T-cell (primary cell): ENCODE measurements at regions of chr3 and their contacts with region 1.

Region 1: DNA sequence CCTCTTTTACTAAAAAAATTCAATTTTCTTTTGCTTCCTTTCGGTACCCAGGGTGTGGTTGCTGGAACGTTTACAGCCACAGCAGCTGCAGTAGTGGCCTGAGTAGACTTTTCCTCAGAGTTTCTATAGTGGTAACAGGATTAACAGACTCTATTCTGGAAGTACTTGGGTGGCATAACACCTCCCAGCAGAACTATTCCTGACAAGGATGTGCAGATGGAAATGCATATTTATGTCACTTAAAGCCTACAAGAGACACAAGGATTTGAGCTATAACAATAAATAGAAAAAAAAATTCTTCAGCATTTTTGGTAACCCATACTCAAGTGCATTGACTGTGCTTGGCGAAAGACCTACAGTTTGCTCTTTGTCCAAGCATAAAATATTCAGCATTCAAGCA is 94.0 kb downstream of the MDFIC2 start:
- DNase-seq: no peak
- ATAC-seq: no peak
- H3K4me3 ChIP-seq: no peak overlapping the region
- H3K4me3 Mint-ChIP-seq: no peak overlapping the region
- H3K27ac ChIP-seq: no peak overlapping the region
- H3K27ac Mint-ChIP-seq: no peak overlapping the region
- H3K4me1 ChIP-seq: no peaks in the 10 kb centered on the region
- H3K4me1 Mint-ChIP-seq: no peaks in the 10 kb centered on the region
- H3K27me3 ChIP-seq: no peaks in the 10 kb centered on the region
- H3K27me3 Mint-ChIP-seq: peaks cover 0 to 15% of the 10 kb centered on the region in 2 donors

Region 2: GRCh38 chr3:70182161-70182560 is 36.3 kb before region 1 on chr3:
- CTCF ChIA-PET with region 1: no interaction called
- POLR2A ChIA-PET with region 1: interaction called in 1 of 2 experiments, 10 read pairs
- DNase-seq: no peak
- ATAC-seq: no peak
- H3K4me3 ChIP-seq: no peak overlapping the region
- H3K4me3 Mint-ChIP-seq: no peak overlapping the region
- H3K27ac ChIP-seq: no peak overlapping the region
- H3K27ac Mint-ChIP-seq: no peak overlapping the region
- H3K4me1 ChIP-seq: no peaks in the 10 kb centered on the region
- H3K4me1 Mint-ChIP-seq: no peaks in the 10 kb centered on the region
- H3K27me3 ChIP-seq: peaks cover 0 to 4% of the 10 kb centered on the region in 2 experiments
- H3K27me3 Mint-ChIP-seq: peaks cover 0 to 13% of the 10 kb centered on the region in 2 donors

Region 3: DNA sequence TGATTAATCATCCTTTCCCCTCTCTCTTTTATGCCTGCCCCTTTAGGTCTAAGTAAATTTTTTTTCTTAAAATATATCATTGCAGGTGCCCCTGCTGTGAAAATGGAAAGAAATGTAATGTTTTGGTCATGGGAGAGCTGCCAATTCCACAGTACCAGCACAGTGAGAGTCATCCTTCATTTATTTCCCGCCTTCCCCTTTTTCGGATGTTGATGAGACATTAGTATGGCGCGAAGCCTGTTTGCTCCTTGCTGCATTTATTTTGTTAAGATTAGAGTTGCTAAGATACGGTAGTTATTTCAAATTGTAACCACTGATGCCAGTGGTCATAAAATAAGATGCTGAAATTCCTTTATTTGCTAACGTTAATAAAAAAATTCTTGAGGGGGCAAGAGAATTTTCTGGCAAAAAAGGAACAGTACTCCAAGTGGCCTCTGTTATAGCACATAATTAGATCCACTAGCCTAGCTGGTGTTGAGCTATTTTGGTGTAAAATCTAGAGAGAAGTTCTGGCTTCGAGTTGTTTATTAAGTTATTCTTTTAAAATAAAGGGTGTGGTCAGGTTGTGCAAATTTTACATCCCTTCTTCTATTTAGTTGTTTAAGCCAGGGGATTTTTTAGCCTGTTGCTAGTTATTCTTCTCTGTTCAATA is 31.2 kb after region 1 on chr3:
- CTCF ChIA-PET with region 1: no interaction called
- POLR2A ChIA-PET with region 1: no interaction called
- DNase-seq: no peak
- ATAC-seq: no peak
- H3K4me3 ChIP-seq: no peak overlapping the region
- H3K4me3 Mint-ChIP-seq: no peak overlapping the region
- H3K27ac ChIP-seq: no peak overlapping the region
- H3K27ac Mint-ChIP-seq: no peak overlapping the region
- H3K4me1 ChIP-seq: no peaks in the 10 kb centered on the region
- H3K4me1 Mint-ChIP-seq: no peaks in the 10 kb centered on the region
- H3K27me3 ChIP-seq: no peaks in the 10 kb centered on the region
- H3K27me3 Mint-ChIP-seq: no peaks in the 10 kb centered on the region

Region 4: GRCh38 chr3:71142440-71143161 is 924.1 kb after region 1 on chr3:
- CTCF ChIA-PET with region 1: no interaction called
- POLR2A ChIA-PET with region 1: no interaction called
- DNase-seq: peak in 2 of 35 experiments; percentile 15 to 25
- ATAC-seq: peak in 2 of 4 experiments; percentile 49 to 61
- H3K4me3 ChIP-seq: no peak overlapping the region
- H3K4me3 Mint-ChIP-seq: no peak overlapping the region
- H3K27ac ChIP-seq: peak overlapping the region; percentile 7
- H3K27ac Mint-ChIP-seq: peak overlapping the region; percentile 36 to 84
- H3K4me1 ChIP-seq: peaks cover 0 to 4% of the 10 kb centered on the region in 2 experiments
- H3K4me1 Mint-ChIP-seq: peaks cover 62 to 75% (median 71%) of the 10 kb centered on the region in 3 donors
- H3K27me3 ChIP-seq: no peaks in the 10 kb centered on the region
- H3K27me3 Mint-ChIP-seq: no peaks in the 10 kb centered on the region

Region 5: GRCh38 chr3:71805199-71805598 is 1586.7 kb after region 1 on chr3:
- CTCF ChIA-PET with region 1: no interaction called
- POLR2A ChIA-PET with region 1: no interaction called
- DNase-seq: peak in 1 of 35 experiments; percentile 8
- ATAC-seq: no peak
- H3K4me3 ChIP-seq: no peak overlapping the region
- H3K4me3 Mint-ChIP-seq: no peak overlapping the region
- H3K27ac ChIP-seq: no peak overlapping the region
- H3K27ac Mint-ChIP-seq: no peak overlapping the region
- H3K4me1 ChIP-seq: no peaks in the 10 kb centered on the region
- H3K4me1 Mint-ChIP-seq: no peaks in the 10 kb centered on the region
- H3K27me3 ChIP-seq: peaks cover 0 to 14% of the 10 kb centered on the region in 2 experiments
- H3K27me3 Mint-ChIP-seq: peaks cover 12 to 15% of the 10 kb centered on the region in 2 donors